HEK293 (cell line): ENCODE measurements at regions of chr1 and their contacts with region 1.

Region 1: DNA sequence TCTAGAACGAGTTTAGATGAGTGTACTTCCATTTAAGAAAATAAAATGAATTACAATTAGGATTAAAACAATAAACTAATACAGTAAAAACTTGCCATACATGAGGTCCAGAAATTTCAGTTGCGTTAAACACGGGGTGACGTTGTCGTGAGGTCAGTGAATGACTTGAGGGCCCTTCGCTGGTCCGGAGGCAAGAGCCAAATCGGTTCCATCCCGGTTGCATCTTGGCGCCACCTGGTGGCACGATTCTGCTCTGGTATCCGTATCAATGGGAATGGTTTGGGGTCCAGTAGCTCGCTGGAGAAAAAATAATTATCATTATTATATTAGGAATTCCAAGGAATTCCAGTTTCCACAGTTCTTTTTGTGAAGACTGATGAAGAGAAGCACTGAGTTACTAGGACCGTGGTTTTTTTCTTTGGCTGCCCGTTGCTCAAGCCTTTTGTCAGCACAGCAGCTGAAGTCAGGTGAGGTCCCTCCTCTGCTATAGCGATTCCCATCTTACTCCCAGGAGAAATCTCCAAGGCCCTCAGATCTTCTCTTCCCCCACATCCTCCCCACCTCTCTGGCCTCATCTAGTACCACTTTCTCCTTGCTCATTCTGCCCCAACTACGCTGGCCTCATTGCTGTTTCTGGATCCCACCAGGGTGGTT is 161.4 kb downstream of the SLC35F3 start:
- H3K4me3 ChIP-seq: no peak overlapping the region
- H3K27ac ChIP-seq: no peak overlapping the region
- H3K4me1 ChIP-seq: no peaks in the 10 kb centered on the region
- CTCF ChIP-seq: peak; percentile 79

Region 2: DNA sequence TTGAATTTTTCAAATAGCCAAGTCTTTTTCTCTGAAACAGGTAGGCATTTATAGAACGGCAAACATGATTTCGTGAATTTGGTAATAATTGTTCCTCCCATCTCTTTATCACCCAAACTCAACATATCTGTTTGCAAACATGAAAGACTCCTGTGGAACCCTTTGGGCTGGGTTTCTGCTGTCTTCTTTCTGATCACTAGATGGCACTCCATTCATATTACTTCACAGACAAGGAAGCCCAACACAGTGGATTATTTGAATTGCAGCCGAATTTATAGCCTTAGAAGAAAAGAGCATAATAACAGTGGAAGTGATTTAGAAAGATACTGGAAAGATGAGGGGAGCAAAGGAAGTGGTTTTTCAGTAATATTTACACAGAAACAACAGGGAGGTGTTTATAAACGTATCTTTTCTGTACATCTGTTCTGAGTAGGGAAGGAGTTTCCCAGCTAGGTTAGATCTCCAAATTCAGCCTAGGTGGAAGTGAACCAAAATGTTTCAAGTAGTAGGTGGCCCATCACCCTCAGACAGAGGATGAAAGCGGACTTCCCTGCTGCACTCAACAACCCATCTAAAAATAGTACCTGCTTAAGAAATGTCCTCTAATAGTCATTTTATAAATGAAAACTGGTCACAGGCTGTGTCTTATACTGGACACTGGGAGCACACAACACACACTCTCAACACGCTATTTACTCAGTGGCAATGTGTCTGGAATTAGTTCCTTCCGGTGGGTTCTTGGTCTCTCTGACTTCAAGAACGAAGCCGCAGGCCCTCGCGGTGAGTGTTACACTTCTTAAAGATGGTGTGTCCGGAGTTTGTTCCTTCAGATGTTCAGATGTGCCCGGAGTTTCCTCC is 670.8 kb before region 1 on chr1:
- CTCF ChIA-PET with region 1: interaction called, 43 read pairs
- POLR2A ChIA-PET with region 1: no interaction called
- H3K4me3 ChIP-seq: no peak overlapping the region
- H3K27ac ChIP-seq: no peak overlapping the region
- H3K4me1 ChIP-seq: no peaks in the 10 kb centered on the region
- CTCF ChIP-seq: peak; percentile 80

Region 3: GRCh38 chr1:233904633-233905415 is 161.1 kb before region 1 on chr1 and contains the start of gene SLC35F3:
- CTCF ChIA-PET with region 1: interaction called, 11 read pairs
- POLR2A ChIA-PET with region 1: no interaction called
- H3K4me3 ChIP-seq: peak within 1 kb of the TSS; percentile 59
- H3K27ac ChIP-seq: no peak within 1 kb of the TSS; the same call in 1 of the 2 replicates
- H3K4me1 ChIP-seq: no peaks in the 10 kb centered on the region
- CTCF ChIP-seq: no peak

Region 4: DNA sequence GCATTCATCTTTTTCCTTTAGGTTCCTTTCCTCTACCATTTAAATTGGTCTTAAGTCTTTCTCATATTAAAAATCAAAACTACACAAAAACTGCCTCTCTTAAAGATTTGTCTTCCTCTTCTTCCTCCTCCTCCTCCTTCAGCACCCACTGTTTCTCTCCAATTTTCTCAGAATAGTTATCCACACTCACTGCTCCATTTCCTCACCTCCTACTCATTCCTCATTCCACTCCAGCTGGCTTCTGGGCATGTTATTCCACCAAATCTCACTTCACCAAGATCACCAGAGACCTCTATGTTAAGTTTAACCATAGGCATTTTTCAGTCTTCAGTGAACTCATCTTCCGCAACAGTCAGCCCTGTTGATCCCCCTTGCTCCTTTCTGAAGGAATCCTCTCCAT is 12.2 kb after region 1 on chr1:
- CTCF ChIA-PET with region 1: interaction called, 28 read pairs
- POLR2A ChIA-PET with region 1: no interaction called
- H3K4me3 ChIP-seq: no peak overlapping the region
- H3K27ac ChIP-seq: no peak overlapping the region
- H3K4me1 ChIP-seq: no peaks in the 10 kb centered on the region
- CTCF ChIP-seq: no peak